ENCODE measurements at regions of chr20 and their contacts with region 1.

Region 1: DNA sequence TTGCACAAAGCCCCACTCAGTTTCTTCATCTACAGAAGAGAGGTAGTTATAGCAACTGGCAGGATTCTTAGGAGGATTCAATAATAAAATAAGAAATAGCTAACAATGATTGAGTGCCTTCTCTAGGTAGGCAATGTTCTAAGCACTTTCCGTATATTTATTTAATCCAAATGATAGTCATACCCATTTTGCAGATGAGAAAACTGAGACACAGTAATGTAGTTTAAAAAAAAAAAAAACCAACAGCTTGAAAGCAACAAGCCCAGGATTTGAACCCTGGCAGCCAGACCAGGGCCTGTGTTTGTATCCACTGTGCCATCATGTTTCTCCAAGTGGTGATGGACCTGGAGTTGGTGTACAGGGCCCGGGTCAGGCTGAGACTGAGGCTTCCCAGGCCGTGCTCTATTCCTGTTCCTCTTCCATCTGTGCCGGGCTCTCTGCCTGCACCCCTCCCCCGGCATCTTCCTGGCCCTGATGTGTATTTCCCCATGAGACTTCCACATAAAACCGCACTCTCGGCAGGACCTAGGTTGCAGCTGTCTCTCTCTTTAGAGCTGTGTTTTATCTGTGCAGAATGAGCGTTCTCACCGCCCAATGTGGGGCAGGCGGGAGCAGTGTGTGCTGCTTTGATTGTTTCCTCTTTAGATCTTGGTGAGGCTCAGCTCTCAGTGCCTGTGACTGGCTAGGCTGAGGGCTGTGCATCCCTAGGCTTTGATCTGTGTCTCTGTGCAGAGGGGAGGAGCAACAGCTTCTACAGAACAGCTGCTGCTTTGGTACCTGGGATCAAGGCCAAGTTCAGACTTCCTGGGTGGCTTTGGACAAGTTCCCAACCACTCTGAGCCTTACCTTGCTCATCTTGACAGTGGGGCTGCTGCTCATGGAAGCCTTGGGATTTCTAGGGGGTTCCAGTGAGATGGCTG is 49.5 kb downstream of the TOX2 start:
- DNase-seq: peak in 7 of 9 donors; percentile 71 to 86 (median 83)
- ATAC-seq: peak; percentile 94
- H3K4me3 ChIP-seq: no peak overlapping the region
- H3K4me3 Mint-ChIP-seq: peak overlapping the region; percentile 47 to 80 (median 72)
- H3K27ac ChIP-seq: peak overlapping the region; percentile 18
- H3K27ac Mint-ChIP-seq: peak overlapping the region in 4 of 9 donors; percentile 16 to 90 (median 59)
- H3K4me1 ChIP-seq: peaks cover 43 to 65% of the 10 kb centered on the region in 2 donors
- H3K4me1 Mint-ChIP-seq: peaks cover 25 to 52% (median 43%) of the 10 kb centered on the region in 7 donors
- H3K27me3 ChIP-seq: no peaks in the 10 kb centered on the region
- H3K27me3 Mint-ChIP-seq: peaks cover 0 to 18% (median 0%) of the 10 kb centered on the region in 5 donors

Region 2: GRCh38 chr20:43914311-43915210 is 49.6 kb before region 1 on chr20 and contains the start of gene TOX2:
- CTCF ChIA-PET with region 1: interaction called, 3 read pairs
- POLR2A ChIA-PET with region 1: no interaction called
- intact Hi-C with region 1: loop called in 1 of 2 experiments (anchors 2 kb)
- DNase-seq: peak; percentile 12 to 59 (median 42)
- ATAC-seq: peak; percentile 86
- H3K4me3 ChIP-seq: peak within 1 kb of the TSS; percentile 57
- H3K4me3 Mint-ChIP-seq: peak within 1 kb of the TSS; percentile 78 to 97 (median 88)
- H3K27ac ChIP-seq: no peak within 1 kb of the TSS
- H3K27ac Mint-ChIP-seq: peak within 1 kb of the TSS in 8 of 9 donors; percentile 70 to 94 (median 78)
- H3K4me1 ChIP-seq: peaks cover 14 to 16% of the 10 kb centered on the region in 2 donors
- H3K4me1 Mint-ChIP-seq: peaks cover 12 to 28% (median 21%) of the 10 kb centered on the region in 7 donors
- H3K27me3 ChIP-seq: peaks cover 0 to 6% of the 10 kb centered on the region in 2 donors
- H3K27me3 Mint-ChIP-seq: peaks cover 26 to 62% (median 34%) of the 10 kb centered on the region in 5 donors
- total RNA-seq, gene TOX2: 0.22 to 7.1 (median 0.96) TPM